ENCODE measurements at regions of chr6 and their contacts with region 1.

Region 1: GRCh38 chr6:5174244-5174643 is 86.5 kb downstream of the LYRM4 start:
- DNase-seq: no peak

Region 2: DNA sequence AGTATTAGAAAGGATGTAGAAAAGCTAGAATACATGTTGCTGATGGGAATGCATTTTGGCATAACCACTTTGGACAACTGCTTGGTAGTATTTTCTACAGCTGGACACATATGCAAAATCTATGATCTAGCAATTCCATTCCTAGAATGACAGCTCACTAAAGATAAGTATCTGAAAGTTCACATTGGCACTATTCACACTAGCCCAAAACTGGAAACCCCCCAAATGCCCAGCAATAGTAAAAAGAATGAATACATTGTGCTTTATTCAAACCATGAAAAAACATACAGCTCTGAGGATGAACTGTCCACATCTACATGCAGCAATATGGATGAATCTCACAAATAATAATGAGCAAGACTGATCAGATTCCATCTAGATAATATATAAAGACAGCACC is 10.2 kb before region 1 on chr6:
- CTCF ChIA-PET with region 1: interaction called, 15 read pairs
- POLR2A ChIA-PET with region 1: no interaction called
- DNase-seq: no peak

Region 3: DNA sequence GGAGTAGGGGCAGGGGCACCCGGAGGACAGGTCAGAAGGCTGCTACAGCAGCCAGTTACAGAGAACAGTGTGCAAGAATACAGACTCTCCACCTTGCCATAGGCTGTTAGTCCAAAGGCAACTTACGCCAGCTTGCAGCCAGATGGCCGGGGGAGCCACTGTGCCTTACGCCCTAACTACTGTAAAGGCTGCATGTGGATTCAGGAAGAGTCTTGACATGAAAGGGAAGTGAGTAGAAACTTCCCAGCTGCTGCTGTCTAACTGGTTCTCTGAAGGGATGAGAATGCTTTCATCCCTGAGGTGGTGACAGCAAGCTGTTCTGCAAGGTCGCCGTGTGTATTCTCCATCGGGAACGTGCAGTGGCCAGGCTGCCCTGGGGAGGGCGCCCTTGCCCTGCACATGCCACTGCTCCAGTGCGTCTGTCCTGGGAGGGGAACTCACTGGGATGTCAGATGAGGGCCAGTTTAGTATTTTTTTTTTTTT is 40.4 kb after region 1 on chr6:
- CTCF ChIA-PET with region 1: no interaction called
- POLR2A ChIA-PET with region 1: no interaction called
- DNase-seq: peak; percentile 72